ENCODE measurements at regions of chrX and their contacts with region 1.

Region 1: DNA sequence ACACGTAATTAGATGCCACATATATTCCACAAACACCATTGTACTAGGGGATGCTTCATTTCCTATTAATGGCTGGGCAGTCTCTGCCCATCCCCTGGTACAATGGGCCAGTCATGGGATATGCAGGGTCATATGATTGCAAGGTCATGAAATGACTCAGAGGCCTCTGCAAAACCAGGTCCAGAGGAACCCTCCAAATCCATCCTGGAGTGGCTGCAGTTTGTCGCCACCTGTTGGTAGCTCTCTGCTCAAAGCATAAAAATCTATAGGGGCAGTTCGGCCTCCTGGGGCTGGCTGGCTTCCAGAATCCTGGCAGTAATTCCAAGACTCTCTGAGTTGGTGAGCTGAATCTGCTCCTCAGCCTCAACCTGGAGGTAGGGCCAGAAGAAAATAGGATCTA is 22.9 kb upstream of the PUDP start:
- DNase-seq: peak in 4 of 9 donors; percentile 16 to 29 (median 21)
- ATAC-seq: peak; percentile 32
- H3K4me3 ChIP-seq: no peak overlapping the region
- H3K4me3 Mint-ChIP-seq: no peak overlapping the region
- H3K27ac ChIP-seq: no peak overlapping the region
- H3K27ac Mint-ChIP-seq: no peak overlapping the region
- H3K4me1 ChIP-seq: no peaks in the 10 kb centered on the region
- H3K4me1 Mint-ChIP-seq: no peaks in the 10 kb centered on the region
- H3K27me3 ChIP-seq: no peaks in the 10 kb centered on the region
- H3K27me3 Mint-ChIP-seq: no peaks in the 10 kb centered on the region

Region 2: DNA sequence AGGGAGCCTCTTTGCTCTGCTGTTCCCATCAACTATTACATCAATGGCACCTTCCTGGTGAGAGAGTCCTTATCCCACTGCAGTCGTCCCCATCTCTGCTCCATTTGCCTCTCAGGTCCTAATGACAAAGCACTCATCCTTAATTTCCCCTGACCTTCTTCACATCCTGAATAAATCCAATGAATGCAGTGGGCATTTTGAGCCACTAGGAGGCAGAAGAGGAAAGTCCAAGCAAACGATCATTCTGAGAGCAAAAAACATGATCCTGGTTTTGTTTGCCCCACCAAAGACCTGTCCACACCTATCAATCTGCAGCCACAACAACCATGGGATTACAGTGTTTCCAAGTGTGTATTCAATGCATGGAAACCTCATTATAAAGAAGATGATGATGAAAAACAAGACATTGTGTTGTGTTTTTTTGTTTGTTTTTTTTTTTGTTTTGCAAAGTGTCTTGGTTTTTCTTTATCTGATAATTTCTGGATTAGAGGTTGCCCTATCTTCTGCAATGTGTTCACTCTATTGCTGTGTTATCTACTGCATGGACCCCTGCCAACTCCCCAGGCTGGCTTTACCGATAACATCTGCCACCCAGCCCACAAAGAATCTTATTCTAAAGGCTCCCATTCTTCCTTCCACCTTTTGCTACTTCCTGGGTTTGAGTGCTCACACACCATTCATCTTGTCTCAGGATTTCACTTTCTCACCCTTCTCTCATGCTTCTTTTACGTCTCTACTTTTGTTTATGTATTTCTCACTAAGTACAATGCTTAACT is 1149.4 kb before region 1 on chrX:
- CTCF ChIA-PET with region 1: no interaction called
- POLR2A ChIA-PET with region 1: no interaction called
- intact Hi-C with region 1: loop called in 1 of 2 experiments (anchors 5 kb)
- DNase-seq: peak in 5 of 9 donors; percentile 8 to 46 (median 21)
- ATAC-seq: no peak
- H3K4me3 ChIP-seq: no peak overlapping the region
- H3K4me3 Mint-ChIP-seq: no peak overlapping the region
- H3K27ac ChIP-seq: no peak overlapping the region
- H3K27ac Mint-ChIP-seq: peak overlapping the region in 1 of 9 donors; percentile 32
- H3K4me1 ChIP-seq: no peaks in the 10 kb centered on the region
- H3K4me1 Mint-ChIP-seq: peaks cover 0 to 6% (median 4%) of the 10 kb centered on the region in 7 donors
- H3K27me3 ChIP-seq: no peaks in the 10 kb centered on the region
- H3K27me3 Mint-ChIP-seq: peaks cover 0 to 11% (median 0%) of the 10 kb centered on the region in 5 donors

Region 3: DNA sequence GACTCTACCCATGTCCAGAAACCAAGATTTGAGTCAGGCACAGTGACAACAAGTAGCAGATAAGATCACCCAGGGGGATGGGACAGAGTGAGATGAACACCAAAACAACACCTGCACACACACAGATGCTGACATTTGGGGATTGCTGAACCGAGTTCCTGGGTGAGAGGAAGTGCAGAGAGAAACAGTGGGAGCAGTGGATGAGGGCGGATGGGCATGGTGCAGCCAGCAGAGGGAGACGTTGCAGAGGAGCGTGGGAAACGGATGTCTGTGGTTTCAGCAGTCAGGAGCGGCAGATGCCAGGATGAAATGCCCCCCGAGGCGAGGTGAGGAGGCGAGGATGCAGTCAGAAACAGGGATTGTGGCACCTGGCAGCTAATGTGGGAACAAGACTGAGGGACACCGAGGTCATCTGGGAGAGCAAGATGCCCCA is 101.9 kb before region 1 on chrX:
- CTCF ChIA-PET with region 1: interaction called, 3 read pairs
- POLR2A ChIA-PET with region 1: no interaction called
- intact Hi-C with region 1: loop called in 1 of 2 experiments (anchors 1 kb)
- DNase-seq: peak in 4 of 9 donors; percentile 24 to 31 (median 27)
- ATAC-seq: peak; percentile 50
- H3K4me3 ChIP-seq: no peak overlapping the region
- H3K4me3 Mint-ChIP-seq: peak overlapping the region; percentile 13 to 82 (median 60)
- H3K27ac ChIP-seq: peak overlapping the region; percentile 12
- H3K27ac Mint-ChIP-seq: peak overlapping the region; percentile 26 to 84 (median 74)
- H3K4me1 ChIP-seq: peaks cover 0 to 4% of the 10 kb centered on the region in 2 donors
- H3K4me1 Mint-ChIP-seq: peaks cover 20 to 75% (median 44%) of the 10 kb centered on the region in 7 donors
- H3K27me3 ChIP-seq: no peaks in the 10 kb centered on the region
- H3K27me3 Mint-ChIP-seq: no peaks in the 10 kb centered on the region

Region 4: DNA sequence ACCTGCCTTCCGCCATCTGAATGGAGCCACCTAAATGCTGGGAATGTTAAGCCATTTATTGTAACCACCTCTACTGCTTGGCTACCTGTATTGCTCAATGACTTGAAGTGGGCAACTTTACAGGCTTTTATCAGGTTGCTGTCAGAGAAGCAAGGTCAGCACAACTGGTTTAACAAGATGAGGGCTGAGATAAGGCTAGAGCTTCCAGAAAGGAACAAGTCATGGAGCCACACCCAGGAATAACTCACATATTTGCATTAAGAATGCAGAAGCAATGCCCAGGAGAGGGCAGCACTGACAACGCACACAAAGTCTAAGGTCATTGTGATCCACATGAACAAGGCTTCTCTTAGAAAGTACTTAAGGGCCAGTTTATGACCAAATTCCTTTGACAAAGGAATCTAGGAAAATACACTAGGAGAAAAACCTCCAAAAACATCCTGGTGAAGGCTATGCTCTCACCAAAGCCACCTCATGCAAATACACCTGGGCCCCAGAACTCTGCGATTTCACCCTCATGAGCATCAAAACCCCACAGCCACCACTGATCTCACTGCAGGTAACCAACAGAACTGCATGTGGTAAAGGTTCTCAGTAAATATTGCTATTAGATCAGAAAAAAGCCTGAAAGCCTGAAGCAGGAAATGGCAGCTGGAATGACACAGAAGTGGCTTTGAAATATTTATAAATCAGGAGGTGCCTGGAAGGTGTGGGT is 38.4 kb before region 1 on chrX:
- CTCF ChIA-PET with region 1: no interaction called
- POLR2A ChIA-PET with region 1: no interaction called
- intact Hi-C with region 1: loop called in 1 of 2 experiments (anchors 1 kb)
- DNase-seq: peak in 5 of 9 donors; percentile 1 to 40 (median 18)
- ATAC-seq: peak; percentile 60
- H3K4me3 ChIP-seq: no peak overlapping the region
- H3K4me3 Mint-ChIP-seq: peak overlapping the region in 3 of 10 donors; percentile 9 to 25 (median 11)
- H3K27ac ChIP-seq: no peak overlapping the region
- H3K27ac Mint-ChIP-seq: peak overlapping the region in 8 of 9 donors; percentile 12 to 87 (median 72)
- H3K4me1 ChIP-seq: no peaks in the 10 kb centered on the region
- H3K4me1 Mint-ChIP-seq: peaks cover 12 to 53% (median 39%) of the 10 kb centered on the region in 7 donors
- H3K27me3 ChIP-seq: no peaks in the 10 kb centered on the region
- H3K27me3 Mint-ChIP-seq: no peaks in the 10 kb centered on the region

Measured in naive thymus-derived CD4-positive, alpha-beta T cell (primary cell).